T-cell (primary cell): ENCODE measurements at regions of chr11 and their contacts with region 1.

Region 1: DNA sequence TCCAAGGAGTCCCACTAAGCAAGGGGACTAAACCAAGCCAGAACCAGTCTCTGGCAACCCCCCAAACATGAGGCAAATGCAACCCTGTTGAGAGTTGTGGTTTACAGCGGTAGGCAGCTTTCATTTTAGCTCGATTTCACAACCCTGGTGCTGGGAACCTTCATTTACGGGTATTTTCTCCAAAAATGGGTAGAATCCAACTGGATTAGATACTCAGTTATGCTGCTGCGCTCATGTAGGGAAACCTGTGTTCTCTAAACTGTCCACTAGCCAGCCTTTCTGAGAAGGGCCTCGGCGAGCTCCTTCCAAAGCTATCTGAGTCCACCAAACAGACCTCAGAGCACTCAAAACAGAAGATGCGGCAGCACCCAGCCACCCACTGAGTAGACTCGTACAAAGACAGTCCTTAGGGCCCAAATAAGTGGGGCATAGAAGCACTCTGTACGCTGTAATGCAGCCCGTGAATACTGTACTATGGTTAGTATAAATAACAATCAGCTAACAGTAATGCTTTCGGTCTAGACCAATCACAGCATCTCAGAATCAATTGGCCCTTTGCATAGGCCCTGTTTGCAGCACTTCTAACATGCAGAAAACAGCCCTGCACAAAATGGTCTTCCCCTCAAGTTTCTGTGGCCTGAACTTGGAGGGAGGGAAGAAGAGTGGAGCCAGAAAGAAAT is 104.7 kb downstream of the ETS1 start:
- DNase-seq: peak in 30 of 35 experiments; percentile 38 to 85 (median 69)
- ATAC-seq: peak; percentile 66 to 75 (median 72)
- H3K4me3 ChIP-seq: peak overlapping the region in 1 of 2 donors; percentile 17
- H3K4me3 Mint-ChIP-seq: peak overlapping the region; percentile 63 to 99 (median 77)
- H3K27ac ChIP-seq: peak overlapping the region; percentile 96
- H3K27ac Mint-ChIP-seq: peak overlapping the region; percentile 98
- H3K4me1 ChIP-seq: peaks cover 76 to 84% of the 10 kb centered on the region in 2 experiments
- H3K4me1 Mint-ChIP-seq: peaks cover 96 to 100% (median 97%) of the 10 kb centered on the region in 3 donors
- H3K27me3 ChIP-seq: no peaks in the 10 kb centered on the region
- H3K27me3 Mint-ChIP-seq: no peaks in the 10 kb centered on the region

Region 2: GRCh38 chr11:128394431-128395089 is 88.1 kb before region 1 on chr11:
- CTCF ChIA-PET with region 1: no interaction called
- POLR2A ChIA-PET with region 1: no interaction called
- DNase-seq: no peak
- ATAC-seq: no peak
- H3K4me3 ChIP-seq: no peak overlapping the region
- H3K4me3 Mint-ChIP-seq: no peak overlapping the region
- H3K27ac ChIP-seq: no peak overlapping the region
- H3K27ac Mint-ChIP-seq: no peak overlapping the region
- H3K4me1 ChIP-seq: no peaks in the 10 kb centered on the region
- H3K4me1 Mint-ChIP-seq: peaks cover 18 to 30% (median 20%) of the 10 kb centered on the region in 3 donors
- H3K27me3 ChIP-seq: no peaks in the 10 kb centered on the region
- H3K27me3 Mint-ChIP-seq: no peaks in the 10 kb centered on the region

Region 3: DNA sequence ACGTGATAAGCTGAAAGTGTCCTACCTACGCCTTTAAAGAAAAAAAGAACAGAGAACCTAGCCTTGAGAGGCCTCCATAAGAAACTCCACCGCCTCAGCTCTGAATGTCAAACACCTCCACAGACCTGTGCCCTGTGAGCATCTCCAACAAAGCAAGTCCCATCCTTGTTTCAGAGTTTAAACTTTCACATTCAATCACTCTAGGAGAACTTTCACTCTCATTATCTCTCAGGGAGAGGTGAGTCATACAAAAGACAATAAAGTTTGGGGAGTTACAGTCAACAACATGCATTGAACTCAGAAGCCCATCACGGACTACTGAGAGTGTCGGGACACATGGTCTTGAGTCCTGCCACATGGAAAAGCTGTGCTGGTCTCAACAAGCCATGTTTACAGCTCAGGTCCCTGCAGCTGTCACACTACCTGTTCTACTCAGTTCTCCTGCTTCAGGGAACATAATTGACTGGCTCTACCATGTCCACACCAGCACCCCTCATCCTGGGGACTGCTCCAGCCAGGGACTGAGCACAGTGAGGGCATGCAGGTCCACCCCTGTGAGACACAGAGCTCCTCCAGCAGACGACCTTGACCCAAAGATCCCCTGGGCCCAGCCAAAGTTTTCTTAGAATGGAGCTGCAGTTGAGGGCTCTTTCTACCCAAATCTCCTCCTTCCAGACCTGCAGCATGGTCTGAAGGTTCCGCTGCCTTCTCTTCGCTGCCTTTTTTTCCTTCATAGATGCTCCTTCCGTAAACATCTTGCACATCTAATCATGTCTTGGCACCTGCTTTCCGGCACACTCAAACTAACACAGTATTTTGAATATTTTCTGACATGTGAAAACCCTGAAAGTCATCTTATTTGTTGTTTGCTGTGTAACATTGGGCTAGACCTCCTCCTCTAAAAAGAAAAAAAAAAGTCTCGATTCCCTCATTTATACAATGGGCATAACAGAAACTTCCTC is 10.2 kb before region 1 on chr11:
- CTCF ChIA-PET with region 1: interaction called, 4 to 5 read pairs
- POLR2A ChIA-PET with region 1: interaction called, 4 to 17 read pairs
- DNase-seq: peak in 4 of 35 experiments; percentile 42 to 70 (median 52)
- ATAC-seq: peak; percentile 12 to 43 (median 30)
- H3K4me3 ChIP-seq: peak overlapping the region; percentile 18 to 42
- H3K4me3 Mint-ChIP-seq: peak overlapping the region; percentile 62 to 99 (median 66)
- H3K27ac ChIP-seq: peak overlapping the region; percentile 96
- H3K27ac Mint-ChIP-seq: peak overlapping the region; percentile 93 to 98
- H3K4me1 ChIP-seq: peaks cover 83 to 86% of the 10 kb centered on the region in 2 experiments
- H3K4me1 Mint-ChIP-seq: peaks cover 100% of the 10 kb centered on the region in 3 donors
- H3K27me3 ChIP-seq: no peaks in the 10 kb centered on the region
- H3K27me3 Mint-ChIP-seq: no peaks in the 10 kb centered on the region